ENCODE measurements at regions of chr6 and their contacts with region 1.

Region 1: DNA sequence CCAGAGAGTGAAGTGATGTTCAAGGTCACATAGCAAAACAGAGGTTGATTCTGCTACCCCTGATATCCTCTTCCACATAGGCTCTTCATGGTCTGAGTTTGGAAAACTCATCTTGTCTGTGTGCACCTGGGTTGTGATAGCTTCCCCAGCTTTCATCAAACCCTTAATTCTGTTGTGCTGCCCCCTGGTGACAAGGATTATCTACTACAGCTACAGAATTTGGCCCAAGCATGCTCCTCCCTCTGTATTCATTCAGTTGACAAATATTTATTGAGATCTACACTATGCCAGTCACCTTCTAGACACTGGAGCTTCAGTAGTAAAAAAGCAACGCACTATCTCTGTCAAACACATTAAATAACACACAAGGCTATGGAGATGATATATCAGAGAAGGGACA is 50.4 kb downstream of the SMPDL3A start:
- DNase-seq: peak; percentile 63
- ATAC-seq: peak; percentile 96
- H3K4me3 ChIP-seq: no peak overlapping the region
- H3K27ac ChIP-seq: no peak overlapping the region
- H3K4me1 ChIP-seq: no peaks in the 10 kb centered on the region
- H3K27me3 ChIP-seq: no peaks in the 10 kb centered on the region
- CTCF ChIP-seq: peak; percentile 63 to 84 (median 63)
- POLR2A ChIP-seq: no peak
- RAD21 ChIP-seq: peak; percentile 75

Region 2: DNA sequence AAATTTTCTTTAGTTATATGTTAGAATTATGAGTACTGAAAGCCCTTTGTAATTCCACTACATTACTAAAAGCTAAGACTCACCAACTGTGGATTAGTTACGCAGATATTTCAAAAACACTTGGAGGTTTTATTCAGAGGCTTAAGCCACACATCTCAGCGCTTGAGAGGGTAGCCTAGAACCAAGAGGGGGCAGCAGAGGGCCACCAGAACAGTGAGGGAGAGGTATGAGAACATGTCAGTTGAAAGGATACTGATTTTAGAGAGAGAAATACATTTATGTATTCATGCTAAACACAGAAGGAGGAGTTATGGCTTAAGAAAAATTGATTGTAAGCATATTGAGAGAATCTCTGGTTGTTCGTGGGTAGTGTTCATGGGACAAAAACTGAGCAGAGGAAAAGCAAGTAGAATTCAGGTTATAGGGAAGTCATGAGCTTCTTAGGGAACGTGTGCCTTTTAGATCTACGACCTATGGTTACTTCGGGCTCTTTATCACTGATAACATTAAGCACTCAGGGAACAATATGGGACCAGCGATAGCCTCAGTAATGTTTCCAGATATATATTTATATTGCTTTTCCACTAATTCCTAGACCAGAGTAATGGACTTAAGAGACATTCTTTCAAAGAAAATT is 347.4 kb before region 1 on chr6:
- CTCF ChIA-PET with region 1: interaction called, 39 read pairs
- POLR2A ChIA-PET with region 1: interaction called, 4 read pairs
- RAD21 ChIA-PET with region 1: interaction called, 3 to 6 read pairs
- intact Hi-C with region 1: loop called (anchors 1 kb)
- DNase-seq: peak; percentile 62
- ATAC-seq: peak; percentile 100
- H3K4me3 ChIP-seq: no peak overlapping the region
- H3K27ac ChIP-seq: no peak overlapping the region
- H3K4me1 ChIP-seq: no peaks in the 10 kb centered on the region
- H3K27me3 ChIP-seq: no peaks in the 10 kb centered on the region
- CTCF ChIP-seq: peak; percentile 88 to 97 (median 92)
- POLR2A ChIP-seq: no peak
- RAD21 ChIP-seq: peak; percentile 91

Region 3: GRCh38 chr6:122730775-122731386 is 108.6 kb before region 1 on chr6:
- CTCF ChIA-PET with region 1: interaction called, 95 read pairs
- POLR2A ChIA-PET with region 1: interaction called, 3 read pairs
- RAD21 ChIA-PET with region 1: interaction called, 6 to 7 read pairs
- intact Hi-C with region 1: loop called (anchors 1 kb)
- DNase-seq: no peak
- ATAC-seq: peak; percentile 65
- H3K4me3 ChIP-seq: no peak overlapping the region
- H3K27ac ChIP-seq: no peak overlapping the region
- H3K4me1 ChIP-seq: no peaks in the 10 kb centered on the region
- H3K27me3 ChIP-seq: no peaks in the 10 kb centered on the region
- CTCF ChIP-seq: peak; percentile 54 to 79 (median 78); a peak in 5 of 6 replicates
- POLR2A ChIP-seq: no peak
- RAD21 ChIP-seq: peak; percentile 88

Region 4: GRCh38 chr6:122749451-122750050 is 89.9 kb before region 1 on chr6:
- CTCF ChIA-PET with region 1: interaction called, 30 read pairs
- POLR2A ChIA-PET with region 1: no interaction called
- RAD21 ChIA-PET with region 1: interaction called, 3 read pairs
- intact Hi-C with region 1: loop called (anchors 1 kb)
- DNase-seq: no peak
- ATAC-seq: no peak
- H3K4me3 ChIP-seq: no peak overlapping the region
- H3K27ac ChIP-seq: no peak overlapping the region
- H3K4me1 ChIP-seq: no peaks in the 10 kb centered on the region
- H3K27me3 ChIP-seq: no peaks in the 10 kb centered on the region
- CTCF ChIP-seq: no peak
- POLR2A ChIP-seq: no peak
- RAD21 ChIP-seq: no peak

Measured in HCT116 (cell line).